PC-3 (cell line): ENCODE measurements at regions of chr2 and their contacts with region 1.

Region 1: GRCh38 chr2:165757906-165758675 is 36.0 kb downstream of the GALNT3 start:
- DNase-seq: peak; percentile 28
- ATAC-seq: peak; percentile 85
- H3K4me3 ChIP-seq: no peak overlapping the region
- H3K27ac ChIP-seq: no peak overlapping the region
- H3K4me1 ChIP-seq: no peaks in the 10 kb centered on the region
- H3K27me3 ChIP-seq: no peaks in the 10 kb centered on the region
- CTCF ChIP-seq: no peak

Region 2: DNA sequence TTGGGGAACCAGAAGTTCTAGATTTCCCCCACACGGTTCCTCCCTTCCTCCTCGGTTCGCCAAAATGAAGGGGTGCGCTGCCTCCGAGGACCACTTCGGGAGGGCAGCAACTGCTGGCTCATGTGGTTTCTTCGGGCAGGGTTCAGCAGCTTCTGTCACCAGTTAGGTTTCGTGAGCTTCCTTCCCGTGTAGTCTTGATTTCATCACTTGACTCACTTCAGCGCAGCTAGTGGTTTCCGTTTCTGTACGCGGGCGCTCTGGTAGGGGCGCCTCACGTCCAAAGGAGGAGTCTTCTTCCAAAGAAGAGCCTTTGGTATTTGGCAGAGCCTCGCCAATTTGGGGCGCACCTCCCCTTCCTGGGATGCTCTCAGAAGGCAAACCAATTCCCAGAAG is 36.4 kb after region 1 on chr2:
- CTCF ChIA-PET with region 1: interaction called, 6 read pairs
- POLR2A ChIA-PET with region 1: interaction called, 7 read pairs
- intact Hi-C with region 1: loop called (anchors 1 kb)
- DNase-seq: peak; percentile 82
- ATAC-seq: peak; percentile 54
- H3K4me3 ChIP-seq: peak overlapping the region; percentile 81
- H3K27ac ChIP-seq: peak overlapping the region; percentile 80
- H3K4me1 ChIP-seq: peaks cover 42% of the 10 kb centered on the region
- H3K27me3 ChIP-seq: no peaks in the 10 kb centered on the region
- CTCF ChIP-seq: peak; percentile 24; the same call in 1 of the 2 replicates